Dorsolateral prefrontal cortex (tissue), 120 donors: ENCODE measurements at regions of chr1 and their contacts with region 1.

Region 1: DNA sequence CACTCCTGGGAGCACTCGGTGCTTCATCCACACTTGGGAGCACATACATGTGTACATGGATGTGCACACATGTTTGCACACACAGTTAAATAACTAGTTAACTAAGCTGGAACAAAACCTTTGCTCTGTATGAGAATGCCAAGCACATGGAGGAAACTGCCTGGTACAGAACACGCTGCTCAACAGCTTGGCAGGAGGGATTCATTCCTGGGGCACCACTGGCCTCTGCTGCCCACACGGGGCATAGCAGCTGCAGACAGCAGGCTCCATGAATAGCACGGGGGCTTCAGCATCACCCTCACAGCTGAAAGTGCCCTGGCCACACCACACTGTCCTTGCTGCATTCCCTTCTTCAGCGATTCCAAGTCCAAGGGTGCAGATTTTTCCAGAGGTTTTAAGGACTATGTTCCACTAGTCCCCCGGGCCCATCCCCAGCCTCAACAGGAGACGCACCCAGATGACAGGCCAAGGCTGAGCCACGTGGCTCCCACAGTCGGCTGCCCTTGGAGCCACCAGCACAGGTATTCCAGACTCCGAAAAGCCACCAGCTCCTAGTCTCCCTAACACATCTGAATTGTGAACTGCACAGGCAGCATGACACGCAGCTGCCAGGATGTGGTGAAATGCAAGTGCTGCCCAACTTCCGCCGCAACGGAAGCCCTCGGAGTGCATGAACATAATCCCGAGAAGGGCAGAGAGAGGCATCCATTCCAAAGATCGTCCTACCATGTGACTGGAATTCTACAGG is 16.9 kb downstream of the NPHP4 start:
- DNase-seq: peak in 8 of 10 donors; percentile 52 to 85 (median 78)
- H3K4me3 ChIP-seq: no peak overlapping the region
- H3K27ac ChIP-seq: peak overlapping the region in 31 of 59 donors; percentile 1 to 70 (median 48)
- H3K27me3 ChIP-seq: no peaks in the 10 kb centered on the region
- CTCF ChIP-seq: peak; percentile 42 to 91 (median 78)

Region 2: GRCh38 chr1:5297180-5297885 is 678.0 kb before region 1 on chr1:
- intact Hi-C with region 1: loop called in 1 of 2 experiments (anchors 10 kb)
- DNase-seq: peak in 9 of 10 donors; percentile 73 to 93 (median 89)
- H3K4me3 ChIP-seq: no peak overlapping the region
- H3K27ac ChIP-seq: peak overlapping the region in 55 of 59 donors; percentile 18 to 92 (median 74)
- H3K27me3 ChIP-seq: peaks cover 0 to 27% (median 0%) of the 10 kb centered on the region in 45 donors
- CTCF ChIP-seq: peak in 4 of 56 donors; percentile 7 to 13 (median 10)

Region 3: DNA sequence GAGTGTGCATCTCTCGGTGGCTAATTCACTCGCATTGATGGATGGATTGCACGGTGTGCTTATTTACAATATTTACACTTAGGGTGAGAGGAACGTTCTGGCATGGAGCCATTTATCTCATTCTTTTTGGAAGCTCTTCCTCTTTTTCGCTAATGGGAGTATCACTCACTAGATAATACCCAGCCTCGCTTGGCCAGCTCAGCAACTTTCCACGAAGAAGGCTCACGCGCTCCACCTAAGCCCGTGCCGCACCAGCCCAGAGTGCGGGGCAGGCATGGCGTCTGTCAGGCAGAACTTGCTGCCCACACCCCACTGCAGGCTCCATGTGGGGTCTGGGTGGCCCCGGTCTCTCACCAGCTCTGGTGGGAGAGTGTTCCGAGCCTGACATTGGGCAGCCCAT is 468.0 kb before region 1 on chr1:
- intact Hi-C with region 1: loop called (anchors 2 to 5 kb)
- DNase-seq: no peak
- H3K4me3 ChIP-seq: no peak overlapping the region
- H3K27ac ChIP-seq: no peak overlapping the region
- H3K27me3 ChIP-seq: no peaks in the 10 kb centered on the region
- CTCF ChIP-seq: no peak

Region 4: GRCh38 chr1:5514519-5515183 is 460.7 kb before region 1 on chr1:
- intact Hi-C with region 1: loop called in 1 of 2 experiments (anchors 5 kb)
- DNase-seq: peak in 9 of 10 donors; percentile 64 to 85 (median 73)
- H3K4me3 ChIP-seq: no peak overlapping the region
- H3K27ac ChIP-seq: no peak overlapping the region
- H3K27me3 ChIP-seq: no peaks in the 10 kb centered on the region
- CTCF ChIP-seq: peak; percentile 97 to 100 (median 99)

Region 5: DNA sequence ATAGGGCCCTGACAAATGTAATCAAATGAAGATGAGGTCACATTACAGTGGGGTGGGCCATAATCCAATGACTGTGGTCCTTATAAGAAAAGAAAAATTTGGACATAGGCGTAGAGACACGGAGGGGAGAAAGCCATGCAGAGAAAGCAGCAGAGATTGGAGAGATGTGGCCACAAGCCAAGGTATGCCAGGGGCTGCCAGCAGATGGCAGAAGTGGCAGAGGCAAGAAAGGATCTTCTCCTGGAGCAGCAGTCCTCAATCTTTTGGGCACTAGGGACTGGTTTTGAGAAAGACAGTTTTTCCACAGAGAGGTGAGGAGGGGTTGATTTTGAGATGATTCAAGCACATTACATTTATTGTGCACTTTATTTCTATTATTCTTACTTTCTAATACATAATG is 338.1 kb before region 1 on chr1:
- intact Hi-C with region 1: loop called (anchors 2 to 10 kb)
- DNase-seq: peak in 4 of 10 donors; percentile 52 to 65 (median 56)
- H3K4me3 ChIP-seq: no peak overlapping the region
- H3K27ac ChIP-seq: no peak overlapping the region
- H3K27me3 ChIP-seq: peaks cover 0 to 19% (median 0%) of the 10 kb centered on the region in 45 donors
- CTCF ChIP-seq: peak in 55 of 56 donors; percentile 19 to 65 (median 46)

Region 6: DNA sequence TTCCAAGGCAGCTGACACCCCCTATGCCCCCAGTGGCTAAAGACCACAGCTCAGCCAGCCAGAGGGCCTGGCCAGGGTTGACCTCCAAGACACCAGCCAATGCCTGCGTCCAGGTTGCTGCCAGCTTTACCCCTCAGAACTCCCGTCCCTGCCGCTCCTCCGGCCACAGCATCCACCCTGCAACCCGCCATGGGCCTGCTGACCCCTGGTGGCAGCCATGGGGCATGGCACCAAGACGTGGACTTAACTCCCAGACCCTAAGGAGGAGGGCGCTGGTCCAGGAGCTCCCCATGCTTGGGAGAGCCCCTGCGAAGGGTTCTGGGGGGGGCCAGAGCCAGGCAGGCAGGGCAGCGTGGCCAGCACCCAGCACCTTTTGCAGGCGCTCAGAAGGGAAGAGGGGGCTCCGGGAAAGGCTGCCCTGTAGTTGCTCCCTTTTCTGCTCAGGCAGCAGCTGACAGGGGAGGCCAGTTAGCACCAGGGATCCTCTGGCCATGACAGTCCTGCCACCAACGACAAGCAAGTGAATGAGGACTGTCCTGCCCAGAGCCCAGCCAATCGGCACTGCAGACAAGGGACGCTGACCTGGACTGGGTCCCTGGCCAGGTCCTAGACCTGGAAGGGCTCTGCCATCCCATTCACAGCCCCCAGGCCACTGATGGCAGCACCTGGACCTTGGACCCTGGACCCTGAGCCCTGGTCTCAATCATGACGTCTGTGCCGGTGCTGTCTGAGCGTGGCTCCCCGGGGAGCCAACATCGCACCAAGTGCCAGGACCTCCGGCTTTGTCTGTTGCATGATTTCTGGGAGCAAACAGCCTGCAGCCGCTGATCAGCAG is 229.3 kb before region 1 on chr1:
- intact Hi-C with region 1: loop called in 1 of 2 experiments (anchors 10 kb)
- DNase-seq: peak; percentile 52 to 85 (median 72)
- H3K4me3 ChIP-seq: peak overlapping the region in 20 of 59 donors; percentile 11 to 55 (median 36)
- H3K27ac ChIP-seq: peak overlapping the region in 4 of 59 donors; percentile 22 to 58 (median 56)
- H3K27me3 ChIP-seq: peaks cover 0 to 10% (median 0%) of the 10 kb centered on the region in 45 donors
- CTCF ChIP-seq: peak; percentile 48 to 97 (median 90)

Region 7: DNA sequence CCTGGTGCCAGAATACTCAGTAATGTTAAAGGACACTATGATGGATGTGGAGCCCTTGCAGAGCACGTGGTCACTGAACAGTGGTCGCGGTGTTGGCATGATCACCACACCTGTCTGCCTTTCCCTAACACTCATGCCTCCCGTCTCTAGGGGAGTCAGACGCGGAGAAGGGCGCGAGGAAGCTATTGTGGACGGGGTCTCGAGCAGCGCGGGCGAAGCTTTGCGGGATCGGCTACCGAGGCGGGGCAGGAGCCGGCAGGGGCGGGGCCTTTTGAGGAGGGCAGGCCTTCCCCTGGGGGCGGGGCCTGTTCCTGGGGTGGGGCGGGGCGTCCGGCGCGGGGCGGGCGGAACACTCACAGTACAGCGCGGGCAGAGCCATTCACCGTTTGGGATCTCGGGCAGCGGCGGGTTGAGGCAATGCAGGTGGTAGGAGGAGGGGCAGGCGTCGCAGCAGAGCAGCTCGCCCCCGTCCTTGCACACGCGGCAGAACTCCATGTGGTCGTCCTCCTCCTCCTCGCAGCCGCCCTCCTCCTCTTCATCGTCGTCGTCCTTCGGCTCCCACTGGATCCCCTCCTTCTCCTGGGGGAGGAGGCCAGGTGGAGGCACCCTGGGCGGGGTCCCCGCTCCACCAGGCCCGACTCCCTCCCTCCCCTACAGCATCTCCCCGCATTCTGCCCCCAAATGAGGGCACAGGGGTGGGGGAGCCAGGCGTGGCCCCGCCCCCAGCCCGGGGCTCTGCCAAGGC is 173.4 kb after region 1 on chr1:
- intact Hi-C with region 1: no loop called
- DNase-seq: peak in 7 of 10 donors; percentile 29 to 78 (median 67)
- H3K4me3 ChIP-seq: peak overlapping the region in 6 of 59 donors; percentile 5 to 27 (median 14)
- H3K27ac ChIP-seq: peak overlapping the region in 35 of 59 donors; percentile 4 to 84 (median 55)
- H3K27me3 ChIP-seq: peaks cover 0 to 37% (median 6%) of the 10 kb centered on the region in 45 donors
- CTCF ChIP-seq: no peak

Region 8: GRCh38 chr1:6235296-6235677 is 260.0 kb after region 1 on chr1:
- intact Hi-C with region 1: no loop called
- DNase-seq: peak in 1 of 10 donors; percentile 21
- H3K4me3 ChIP-seq: peak overlapping the region; percentile 57 to 96 (median 79)
- H3K27ac ChIP-seq: peak overlapping the region in 29 of 59 donors; percentile 2 to 83 (median 53)
- H3K27me3 ChIP-seq: peaks cover 0 to 17% (median 0%) of the 10 kb centered on the region in 45 donors
- CTCF ChIP-seq: no peak